CD8-positive, alpha-beta memory T cell (primary cell): ENCODE measurements at regions of chr2 and their contacts with region 1.

Region 1: DNA sequence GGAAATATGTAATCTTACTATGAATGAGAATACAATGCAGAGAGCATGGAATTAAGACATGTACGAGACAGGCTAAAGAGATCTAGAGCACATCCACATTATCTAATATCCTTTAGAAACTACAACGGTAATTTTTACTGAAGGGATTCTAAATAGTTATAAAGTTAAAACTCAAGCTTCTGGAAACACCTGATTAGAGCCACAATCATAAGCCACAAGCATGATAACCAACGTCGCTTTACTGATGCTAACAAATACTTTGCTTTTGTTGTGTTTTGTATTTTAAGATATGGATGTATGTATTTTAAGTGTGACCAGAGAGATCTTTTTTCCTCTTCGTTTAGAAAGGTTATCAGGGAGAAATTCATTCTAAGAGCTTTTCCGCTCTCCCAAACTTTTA is 44.0 kb upstream of the STK17B start:
- DNase-seq: no peak
- H3K4me3 ChIP-seq: no peak overlapping the region
- H3K4me3 Mint-ChIP-seq: no peak overlapping the region
- H3K27ac ChIP-seq: no peak overlapping the region
- H3K27ac Mint-ChIP-seq: peak overlapping the region in 2 of 8 donors; percentile 18 to 61
- H3K4me1 ChIP-seq: peaks cover 61% of the 10 kb centered on the region
- H3K4me1 Mint-ChIP-seq: peaks cover 45 to 86% (median 73%) of the 10 kb centered on the region in 3 donors
- H3K27me3 ChIP-seq: no peaks in the 10 kb centered on the region
- H3K27me3 Mint-ChIP-seq: no peaks in the 10 kb centered on the region

Region 2: GRCh38 chr2:196233021-196233804 is 17.8 kb after region 1 on chr2:
- CTCF ChIA-PET with region 1: interaction called, 23 read pairs
- POLR2A ChIA-PET with region 1: interaction called, 12 read pairs
- DNase-seq: no peak
- H3K4me3 ChIP-seq: no peak overlapping the region
- H3K4me3 Mint-ChIP-seq: peak overlapping the region in 2 of 7 donors; percentile 39 to 45
- H3K27ac ChIP-seq: no peak overlapping the region
- H3K27ac Mint-ChIP-seq: peak overlapping the region; percentile 88 to 95 (median 90)
- H3K4me1 ChIP-seq: peaks cover 83% of the 10 kb centered on the region
- H3K4me1 Mint-ChIP-seq: peaks cover 69 to 94% (median 90%) of the 10 kb centered on the region in 3 donors
- H3K27me3 ChIP-seq: no peaks in the 10 kb centered on the region
- H3K27me3 Mint-ChIP-seq: no peaks in the 10 kb centered on the region